Right cardiac atrium (tissue), 5 donors: ENCODE measurements at regions of chr19 and their contacts with region 1.

Region 1: GRCh38 chr19:48513289-48514122 is 1.9 kb upstream of the LMTK3 start:
- DNase-seq: peak; percentile 55 to 81 (median 78)
- ATAC-seq: peak; percentile 81
- H3K4me3 ChIP-seq: peak overlapping the region; percentile 68
- H3K27ac ChIP-seq: no peak overlapping the region
- H3K4me1 ChIP-seq: no peaks in the 10 kb centered on the region
- H3K27me3 ChIP-seq: no peaks in the 10 kb centered on the region

Region 2: GRCh38 chr19:48568345-48568886 is 54.9 kb after region 1 on chr19:
- intact Hi-C with region 1: loop called in 1 of 4 experiments (anchors 10 kb)
- DNase-seq: peak; percentile 93 to 94 (median 93)
- ATAC-seq: peak; percentile 98
- H3K4me3 ChIP-seq: no peak overlapping the region
- H3K27ac ChIP-seq: peak overlapping the region; percentile 39
- H3K4me1 ChIP-seq: no peaks in the 10 kb centered on the region
- H3K27me3 ChIP-seq: no peaks in the 10 kb centered on the region